Caki2 (cell line): ENCODE measurements at regions of chr3 and their contacts with region 1.

Region 1: GRCh38 chr3:123028233-123028828 is 768 bp upstream of the SEMA5B start:
- DNase-seq: peak; percentile 62

Region 2: DNA sequence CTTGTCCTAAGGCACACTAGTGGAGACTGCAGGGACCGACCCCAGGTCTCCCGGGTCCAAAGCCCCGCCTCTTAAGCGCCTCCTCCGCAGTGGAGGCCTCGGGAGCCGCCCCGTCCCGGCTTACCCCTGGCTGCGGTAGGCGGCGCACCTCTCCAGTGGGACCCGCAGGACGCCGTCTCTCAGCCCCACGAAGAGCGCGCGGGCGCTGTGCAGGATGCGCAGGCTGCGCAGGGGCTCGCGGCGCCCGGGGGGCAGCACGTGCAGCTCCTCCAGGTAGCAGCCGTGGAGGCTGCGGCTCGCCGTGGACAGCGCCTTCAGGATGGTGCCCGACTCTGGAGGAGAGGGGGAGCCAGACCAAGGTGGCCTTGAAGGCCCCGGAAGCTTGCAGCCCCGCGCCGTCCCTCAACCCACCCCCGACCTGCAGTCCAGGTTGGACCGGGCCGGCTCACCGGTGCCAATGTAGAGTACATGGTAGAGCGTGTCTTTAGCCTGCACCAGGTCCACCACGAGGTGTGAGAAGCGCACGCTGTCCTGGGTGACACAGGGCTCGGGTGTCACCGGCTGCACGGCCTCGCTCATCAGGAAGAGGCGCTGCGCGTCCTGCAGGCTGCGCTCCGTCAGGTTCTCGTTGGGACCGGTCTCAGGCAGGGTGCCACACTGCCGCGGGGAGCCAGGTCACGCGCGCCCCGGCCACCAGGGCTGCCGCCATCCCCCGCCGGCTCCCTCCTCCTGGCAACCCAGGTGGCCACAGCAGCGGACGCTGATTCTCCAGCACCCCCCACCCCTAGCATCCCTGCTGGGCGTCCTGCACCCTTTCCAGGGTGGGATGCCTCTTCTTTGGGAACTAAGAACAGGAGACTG is 106.3 kb before region 1 on chr3:
- in situ Hi-C with region 1: loop called (anchors 25 kb)
- DNase-seq: no peak

Region 3: DNA sequence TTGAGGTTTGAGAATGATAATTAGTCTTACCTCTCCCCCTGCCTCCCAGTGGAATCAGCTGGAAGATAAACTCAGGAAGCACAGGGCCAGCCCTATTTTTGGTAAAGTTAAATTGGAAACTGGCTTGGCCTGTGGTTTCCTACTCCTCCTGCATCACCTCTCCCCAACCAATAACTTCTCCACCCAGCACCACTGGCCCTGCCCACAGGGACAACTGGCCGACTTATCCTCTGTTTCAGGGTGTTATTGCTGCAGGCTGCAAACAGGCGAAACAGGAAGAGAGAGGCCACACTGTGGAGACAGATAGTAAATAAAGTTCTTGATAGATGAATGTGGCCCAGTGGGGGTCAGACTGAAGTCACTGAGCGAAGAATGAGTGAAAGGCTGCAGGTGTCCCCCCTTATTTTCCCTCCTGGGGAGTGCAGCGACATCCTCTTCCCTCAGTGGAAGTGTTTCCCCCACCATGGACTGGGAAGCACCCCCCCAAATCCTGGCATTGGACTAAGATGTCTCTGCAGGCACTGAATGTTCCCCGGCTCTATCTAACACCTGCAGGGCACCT is 85.6 kb after region 1 on chr3:
- in situ Hi-C with region 1: no loop called
- DNase-seq: no peak

Region 4: DNA sequence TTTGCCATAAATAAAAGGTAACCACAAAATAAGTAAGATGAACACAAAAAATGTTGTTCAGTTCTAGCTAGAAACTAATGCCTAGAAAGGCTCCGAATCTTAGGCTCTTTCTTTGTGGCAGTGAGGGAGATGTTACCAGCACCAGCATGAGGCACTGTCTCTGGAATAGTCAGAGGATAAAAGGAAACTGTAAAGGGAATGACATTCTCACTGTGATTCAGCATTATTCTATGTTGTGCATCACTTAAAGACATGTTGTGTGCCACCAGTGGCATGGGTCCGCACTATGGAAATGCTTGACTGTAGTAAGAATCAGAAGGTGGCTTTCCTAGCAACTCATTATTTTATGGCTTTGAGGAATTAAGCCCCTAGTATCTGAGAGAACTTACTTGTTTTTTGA is 244.2 kb after region 1 on chr3:
- in situ Hi-C with region 1: no loop called
- DNase-seq: peak; percentile 25